Naive thymus-derived CD4-positive, alpha-beta T cell (primary cell): ENCODE measurements at regions of chr7 and their contacts with region 1.

Region 1: DNA sequence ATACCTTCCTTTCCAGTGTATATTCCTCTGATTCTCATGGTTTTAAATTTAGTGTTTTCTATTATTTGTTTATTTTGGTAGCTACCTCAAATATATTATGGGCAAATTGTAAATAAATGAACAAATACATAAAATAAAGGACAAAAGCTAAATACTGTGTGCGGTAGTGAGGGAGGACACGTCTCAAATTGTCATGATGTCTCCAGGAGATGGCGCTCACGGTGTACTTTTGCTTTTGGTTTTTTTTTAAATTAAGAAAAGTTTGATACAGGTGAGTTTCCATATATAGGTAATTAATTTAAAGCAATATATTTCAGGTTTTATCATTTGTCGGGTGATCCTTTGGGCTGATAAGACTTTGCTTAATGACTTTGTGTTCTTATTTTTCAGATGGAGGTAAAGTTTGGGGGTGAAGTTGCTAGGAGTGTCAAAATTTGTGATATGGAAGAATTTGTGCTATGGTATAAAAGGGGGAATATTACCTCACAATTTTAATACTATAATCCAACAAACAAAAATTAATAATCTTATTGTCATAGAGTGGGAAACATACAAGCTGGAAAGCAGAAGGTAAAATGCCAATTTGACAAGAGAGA is 68.4 kb upstream of the TMEM229A start:
- DNase-seq: no peak
- ATAC-seq: no peak
- H3K4me3 ChIP-seq: no peak overlapping the region
- H3K4me3 Mint-ChIP-seq: no peak overlapping the region
- H3K27ac ChIP-seq: no peak overlapping the region
- H3K27ac Mint-ChIP-seq: no peak overlapping the region
- H3K4me1 ChIP-seq: no peaks in the 10 kb centered on the region
- H3K4me1 Mint-ChIP-seq: no peaks in the 10 kb centered on the region
- H3K27me3 ChIP-seq: no peaks in the 10 kb centered on the region
- H3K27me3 Mint-ChIP-seq: peaks cover 0 to 8% (median 0%) of the 10 kb centered on the region in 5 donors

Region 2: GRCh38 chr7:124784879-124785818 is 683.9 kb after region 1 on chr7:
- CTCF ChIA-PET with region 1: no interaction called
- POLR2A ChIA-PET with region 1: no interaction called
- intact Hi-C with region 1: loop called in 1 of 2 experiments (anchors 5 kb)
- DNase-seq: no peak
- ATAC-seq: no peak
- H3K4me3 ChIP-seq: no peak overlapping the region
- H3K4me3 Mint-ChIP-seq: no peak overlapping the region
- H3K27ac ChIP-seq: no peak overlapping the region
- H3K27ac Mint-ChIP-seq: no peak overlapping the region
- H3K4me1 ChIP-seq: no peaks in the 10 kb centered on the region
- H3K4me1 Mint-ChIP-seq: no peaks in the 10 kb centered on the region
- H3K27me3 ChIP-seq: no peaks in the 10 kb centered on the region
- H3K27me3 Mint-ChIP-seq: peaks cover 2 to 25% (median 11%) of the 10 kb centered on the region in 5 donors